Mammary epithelial cell (primary cell): ENCODE measurements at regions of chr13 and their contacts with region 1.

Region 1: DNA sequence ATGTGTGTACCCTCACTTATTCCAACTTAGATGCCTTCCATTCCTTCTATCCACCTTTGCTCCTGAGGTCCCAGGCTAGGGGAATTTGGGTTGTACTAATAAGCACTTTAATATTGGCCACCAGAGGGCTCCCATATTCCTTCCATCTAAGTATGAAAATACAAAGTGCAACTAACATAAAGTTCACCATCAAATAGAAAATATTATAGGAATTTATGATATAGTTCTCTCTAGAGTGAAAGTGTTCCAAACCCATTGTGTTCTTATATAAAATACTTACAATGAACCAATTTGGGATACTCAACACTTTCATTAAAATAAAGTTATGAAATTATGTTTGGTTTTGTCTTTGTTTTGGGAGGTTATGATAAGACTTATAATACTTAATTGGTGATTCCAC is 62.3 kb downstream of the ITGBL1 start:
- DNase-seq: peak; percentile 46
- H3K4me3 ChIP-seq: no peak overlapping the region
- H3K27ac ChIP-seq: no peak overlapping the region
- H3K4me1 ChIP-seq: peaks cover 14% of the 10 kb centered on the region
- H3K27me3 ChIP-seq: no peaks in the 10 kb centered on the region
- CTCF ChIP-seq: peak; percentile 72 to 74

Region 2: GRCh38 chr13:101382086-101382485 is 132.7 kb before region 1 on chr13:
- CTCF ChIA-PET with region 1: no interaction called
- dilution Hi-C with region 1: no loop called
- in situ Hi-C with region 1: no loop called
- intact Hi-C with region 1: no loop called
- DNase-seq: no peak
- H3K4me3 ChIP-seq: no peak overlapping the region
- H3K27ac ChIP-seq: no peak overlapping the region
- H3K4me1 ChIP-seq: no peaks in the 10 kb centered on the region
- H3K27me3 ChIP-seq: no peaks in the 10 kb centered on the region
- CTCF ChIP-seq: no peak

Region 3: DNA sequence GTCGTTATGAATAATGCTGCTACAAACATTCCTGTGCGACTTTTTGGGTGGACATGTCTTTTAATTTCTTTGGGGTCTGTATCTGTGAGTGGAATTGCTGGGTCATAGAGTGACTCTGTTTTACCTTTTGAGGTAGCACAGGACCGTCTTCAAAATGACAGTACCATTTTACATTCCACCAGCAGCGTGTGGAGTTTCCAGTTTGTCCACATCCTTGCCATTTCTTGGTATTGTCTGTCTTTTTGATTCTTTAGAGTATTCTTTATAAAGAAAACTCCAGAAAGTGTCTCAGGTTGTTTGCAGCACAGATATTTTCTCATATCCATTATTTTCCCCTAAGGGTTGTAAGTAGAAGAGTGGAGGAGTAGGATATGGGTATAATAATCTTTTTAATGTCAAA is 88.2 kb after region 1 on chr13:
- CTCF ChIA-PET with region 1: no interaction called
- dilution Hi-C with region 1: no loop called
- in situ Hi-C with region 1: no loop called
- intact Hi-C with region 1: no loop called
- DNase-seq: no peak
- H3K4me3 ChIP-seq: no peak overlapping the region
- H3K27ac ChIP-seq: no peak overlapping the region
- H3K4me1 ChIP-seq: no peaks in the 10 kb centered on the region
- H3K27me3 ChIP-seq: no peaks in the 10 kb centered on the region
- CTCF ChIP-seq: no peak

Region 4: DNA sequence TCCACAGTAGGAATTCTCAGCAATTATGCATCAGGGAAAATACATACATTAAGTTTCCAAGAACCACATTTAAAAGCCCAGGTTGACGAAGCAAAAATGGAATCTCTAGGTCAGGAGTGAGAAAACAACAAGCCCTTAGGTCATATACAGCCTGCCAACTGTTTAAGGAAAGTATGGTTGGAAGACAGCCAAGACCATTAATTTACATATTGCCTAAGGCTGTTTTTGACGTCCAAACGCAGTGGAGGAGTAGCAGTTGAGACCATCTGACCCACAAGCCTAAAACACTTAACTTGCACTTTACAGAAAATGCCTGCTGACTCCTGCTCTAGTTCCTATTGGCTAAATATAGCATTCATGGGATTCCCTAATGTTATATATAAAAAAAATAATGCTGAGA is 236.7 kb after region 1 on chr13:
- CTCF ChIA-PET with region 1: no interaction called
- dilution Hi-C with region 1: no loop called
- in situ Hi-C with region 1: loop called (anchors 5 to 10 kb)
- intact Hi-C with region 1: no loop called
- DNase-seq: peak; percentile 66
- H3K4me3 ChIP-seq: no peak overlapping the region
- H3K27ac ChIP-seq: no peak overlapping the region
- H3K4me1 ChIP-seq: peaks cover 4% of the 10 kb centered on the region
- H3K27me3 ChIP-seq: no peaks in the 10 kb centered on the region
- CTCF ChIP-seq: no peak

Region 5: GRCh38 chr13:101757446-101758039 is 242.8 kb after region 1 on chr13:
- CTCF ChIA-PET with region 1: no interaction called
- dilution Hi-C with region 1: no loop called
- in situ Hi-C with region 1: loop called (anchors 5 to 10 kb)
- intact Hi-C with region 1: loop called (anchors 1 kb)
- DNase-seq: peak; percentile 42
- H3K4me3 ChIP-seq: no peak overlapping the region
- H3K27ac ChIP-seq: no peak overlapping the region
- H3K4me1 ChIP-seq: no peaks in the 10 kb centered on the region
- H3K27me3 ChIP-seq: peaks cover 4% of the 10 kb centered on the region
- CTCF ChIP-seq: peak; percentile 42 to 63